CD8-positive, alpha-beta memory T cell (primary cell): ENCODE measurements at regions of chr7 and their contacts with region 1.

Region 1: DNA sequence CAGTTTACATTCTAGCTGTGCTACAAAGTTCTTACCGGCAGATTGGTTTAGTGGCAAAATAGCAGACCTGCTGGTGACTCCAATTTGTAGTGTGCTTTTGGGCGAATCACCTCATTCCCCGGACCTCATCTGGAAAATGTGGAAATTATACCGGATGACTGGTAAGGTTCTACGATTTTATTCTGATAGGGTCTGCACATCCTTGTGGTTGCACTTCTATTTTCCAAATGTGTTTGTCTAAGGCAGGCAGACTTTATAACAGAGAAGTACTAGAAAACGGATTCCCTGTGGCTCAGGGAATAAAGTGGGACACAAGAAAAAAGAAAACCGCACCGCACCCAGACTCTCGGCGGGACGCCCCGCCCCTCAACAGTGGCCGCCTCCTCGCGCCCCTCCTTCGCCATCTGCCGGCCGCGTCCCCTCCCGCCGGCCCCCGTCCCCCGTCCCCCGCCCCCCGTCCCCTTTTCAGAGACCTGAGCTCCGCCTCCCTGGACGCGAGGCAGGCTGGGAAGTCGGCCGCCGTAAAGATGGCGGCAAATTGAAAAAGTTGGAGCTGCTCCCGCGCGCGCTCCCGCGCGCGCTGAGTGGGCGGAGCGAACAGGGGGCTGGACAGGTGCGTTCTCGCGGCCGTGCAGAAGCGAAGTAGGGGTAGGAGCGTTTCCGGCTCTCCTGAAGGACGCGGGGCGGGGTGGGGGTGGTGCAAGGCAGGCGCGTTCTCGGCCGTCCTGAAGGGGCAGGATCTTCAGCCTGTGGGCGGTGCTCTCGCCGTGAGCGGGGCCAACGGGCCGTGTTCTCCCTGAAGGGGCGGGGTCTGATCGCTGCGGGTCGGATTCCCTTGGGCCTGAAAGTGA is 531 bp upstream of the CCM2 start:
- DNase-seq: peak; percentile 98 to 100 (median 99)
- H3K4me3 ChIP-seq: peak overlapping the region; percentile 67
- H3K4me3 Mint-ChIP-seq: peak overlapping the region; percentile 97 to 99 (median 99)
- H3K27ac ChIP-seq: peak overlapping the region; percentile 75
- H3K27ac Mint-ChIP-seq: peak overlapping the region; percentile 93 to 97 (median 96)
- H3K4me1 ChIP-seq: peaks cover 55% of the 10 kb centered on the region
- H3K4me1 Mint-ChIP-seq: peaks cover 46 to 61% (median 54%) of the 10 kb centered on the region in 3 donors
- H3K27me3 ChIP-seq: no peaks in the 10 kb centered on the region
- H3K27me3 Mint-ChIP-seq: no peaks in the 10 kb centered on the region

Region 2: GRCh38 chr7:44980393-44981034 is 19.0 kb before region 1 on chr7:
- CTCF ChIA-PET with region 1: interaction called, 117 read pairs
- POLR2A ChIA-PET with region 1: interaction called, 14 read pairs
- DNase-seq: peak; percentile 58 to 86 (median 65)
- H3K4me3 ChIP-seq: peak overlapping the region; percentile 91
- H3K4me3 Mint-ChIP-seq: peak overlapping the region; percentile 96 to 98 (median 98)
- H3K27ac ChIP-seq: peak overlapping the region; percentile 94
- H3K27ac Mint-ChIP-seq: peak overlapping the region; percentile 87 to 100 (median 93)
- H3K4me1 ChIP-seq: peaks cover 76% of the 10 kb centered on the region
- H3K4me1 Mint-ChIP-seq: peaks cover 72 to 95% (median 76%) of the 10 kb centered on the region in 3 donors
- H3K27me3 ChIP-seq: no peaks in the 10 kb centered on the region
- H3K27me3 Mint-ChIP-seq: no peaks in the 10 kb centered on the region

Region 3: DNA sequence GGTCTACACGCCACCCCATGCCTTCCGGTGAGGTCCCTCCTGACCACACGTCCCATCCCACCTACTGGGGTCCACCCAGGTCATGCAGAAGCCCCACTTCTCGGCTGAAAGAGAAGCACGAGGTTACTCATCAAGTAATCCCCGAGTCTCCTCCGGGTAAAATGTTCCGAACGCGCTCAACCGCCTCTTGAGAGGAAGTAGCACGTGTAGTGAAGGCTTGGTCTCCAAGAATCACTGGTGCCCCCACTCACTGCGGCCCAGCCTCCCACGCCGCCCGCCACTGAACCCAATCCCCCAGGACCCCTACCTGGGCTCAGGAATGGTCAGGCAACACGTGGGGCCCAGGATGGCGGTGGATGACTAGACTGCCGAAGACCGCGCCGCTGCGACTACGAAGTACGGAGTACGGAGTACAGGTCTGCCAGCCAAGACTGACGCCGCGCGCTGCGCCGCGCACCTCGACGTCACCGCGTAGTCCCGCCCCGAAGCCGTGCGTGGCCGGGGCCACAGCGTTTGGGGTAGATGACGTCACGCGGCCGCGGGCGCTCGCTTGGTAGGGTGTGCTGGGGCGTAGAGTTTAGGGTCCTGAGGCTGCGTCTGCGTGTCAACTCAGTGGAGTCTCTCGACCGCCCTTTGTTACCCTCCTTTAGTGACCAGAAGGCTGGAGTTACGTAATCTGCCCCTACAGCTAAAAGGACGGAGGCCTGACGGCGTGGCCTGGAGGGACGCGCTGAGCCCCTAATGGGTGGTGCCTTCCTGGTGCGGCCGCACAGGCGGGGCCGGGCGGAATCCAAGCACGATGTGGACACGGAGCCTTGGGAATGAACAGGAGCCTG is 13.0 kb before region 1 on chr7:
- CTCF ChIA-PET with region 1: interaction called, 13 read pairs
- POLR2A ChIA-PET with region 1: interaction called, 9 read pairs
- DNase-seq: peak; percentile 91 to 97 (median 94)
- H3K4me3 ChIP-seq: peak overlapping the region; percentile 90
- H3K4me3 Mint-ChIP-seq: peak overlapping the region; percentile 91 to 98 (median 97)
- H3K27ac ChIP-seq: peak overlapping the region; percentile 94
- H3K27ac Mint-ChIP-seq: peak overlapping the region; percentile 93 to 100 (median 99)
- H3K4me1 ChIP-seq: peaks cover 42% of the 10 kb centered on the region
- H3K4me1 Mint-ChIP-seq: peaks cover 49 to 64% (median 58%) of the 10 kb centered on the region in 3 donors
- H3K27me3 ChIP-seq: no peaks in the 10 kb centered on the region
- H3K27me3 Mint-ChIP-seq: no peaks in the 10 kb centered on the region

Region 4: DNA sequence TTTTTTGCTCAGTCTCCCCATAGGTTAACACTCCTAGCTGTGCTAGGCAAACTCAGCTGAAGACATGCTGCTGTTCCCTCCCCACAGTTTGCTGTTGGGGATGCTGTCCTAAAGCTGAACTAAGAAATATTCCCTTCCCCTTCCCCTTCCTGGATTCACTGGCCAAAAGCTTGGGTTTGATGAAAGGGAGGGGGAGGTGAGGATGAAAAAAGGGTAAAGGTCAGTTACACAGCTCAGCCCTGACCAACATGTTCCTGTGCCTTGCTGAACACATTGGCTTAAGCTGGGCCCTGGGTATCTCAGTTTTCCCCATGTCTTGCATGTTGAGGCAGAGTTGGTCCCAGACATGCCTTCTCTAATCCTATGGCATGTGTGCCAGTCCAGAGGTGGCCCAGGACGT is 15.8 kb after region 1 on chr7:
- CTCF ChIA-PET with region 1: interaction called, 10 read pairs
- POLR2A ChIA-PET with region 1: interaction called, 6 read pairs
- DNase-seq: no peak
- H3K4me3 ChIP-seq: no peak overlapping the region
- H3K4me3 Mint-ChIP-seq: no peak overlapping the region
- H3K27ac ChIP-seq: no peak overlapping the region
- H3K27ac Mint-ChIP-seq: peak overlapping the region in 6 of 8 donors; percentile 2 to 73 (median 38)
- H3K4me1 ChIP-seq: peaks cover 11% of the 10 kb centered on the region
- H3K4me1 Mint-ChIP-seq: peaks cover 26 to 44% (median 27%) of the 10 kb centered on the region in 3 donors
- H3K27me3 ChIP-seq: no peaks in the 10 kb centered on the region
- H3K27me3 Mint-ChIP-seq: no peaks in the 10 kb centered on the region

Region 5: GRCh38 chr7:45026984-45027773 is 27.7 kb after region 1 on chr7:
- CTCF ChIA-PET with region 1: interaction called, 20 read pairs
- POLR2A ChIA-PET with region 1: interaction called, 81 read pairs
- DNase-seq: peak in 3 of 5 donors; percentile 59 to 75 (median 60)
- H3K4me3 ChIP-seq: peak overlapping the region; percentile 100
- H3K4me3 Mint-ChIP-seq: peak overlapping the region; percentile 83 to 98 (median 91)
- H3K27ac ChIP-seq: peak overlapping the region; percentile 87
- H3K27ac Mint-ChIP-seq: peak overlapping the region; percentile 62 to 99 (median 93)
- H3K4me1 ChIP-seq: peaks cover 49% of the 10 kb centered on the region
- H3K4me1 Mint-ChIP-seq: peaks cover 54 to 74% (median 72%) of the 10 kb centered on the region in 3 donors
- H3K27me3 ChIP-seq: no peaks in the 10 kb centered on the region
- H3K27me3 Mint-ChIP-seq: no peaks in the 10 kb centered on the region

Region 6: GRCh38 chr7:45052011-45052410 is 52.5 kb after region 1 on chr7:
- CTCF ChIA-PET with region 1: no interaction called
- POLR2A ChIA-PET with region 1: no interaction called
- DNase-seq: no peak
- H3K4me3 ChIP-seq: no peak overlapping the region
- H3K4me3 Mint-ChIP-seq: no peak overlapping the region
- H3K27ac ChIP-seq: no peak overlapping the region
- H3K27ac Mint-ChIP-seq: peak overlapping the region in 6 of 8 donors; percentile 10 to 90 (median 64)
- H3K4me1 ChIP-seq: peaks cover 26% of the 10 kb centered on the region
- H3K4me1 Mint-ChIP-seq: peaks cover 70 to 91% (median 76%) of the 10 kb centered on the region in 3 donors
- H3K27me3 ChIP-seq: no peaks in the 10 kb centered on the region
- H3K27me3 Mint-ChIP-seq: no peaks in the 10 kb centered on the region